WTC11 (cell line): ENCODE measurements at regions of chr11 and their contacts with region 1.

Region 1: DNA sequence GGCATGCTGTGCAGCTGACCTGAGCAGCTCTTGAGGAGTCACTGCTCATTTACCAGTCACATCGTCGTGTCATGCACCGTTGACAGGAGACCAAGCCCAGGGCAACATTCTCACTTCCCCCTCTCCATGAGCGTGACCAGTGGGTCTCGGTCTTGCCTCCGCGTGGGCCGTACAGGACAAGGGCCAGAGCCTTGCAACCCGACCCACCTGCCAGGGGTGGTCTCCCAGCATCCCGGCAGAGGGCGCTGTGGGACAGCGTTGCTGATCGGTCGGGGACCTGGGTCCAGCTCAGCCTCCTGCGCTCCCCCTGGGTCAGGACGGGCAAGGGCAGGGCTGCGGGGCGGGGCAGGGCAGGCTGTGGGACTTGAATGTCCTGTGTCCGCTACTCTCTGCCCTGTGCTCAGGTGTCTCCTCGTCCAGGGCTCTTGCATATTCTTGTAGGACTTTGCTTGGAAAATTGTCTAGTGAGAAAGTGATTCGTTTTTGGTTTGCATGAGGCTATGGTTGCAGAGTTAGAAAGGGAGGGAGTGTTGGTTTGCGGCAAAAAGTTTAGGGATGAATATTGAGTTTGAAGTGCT is 16.2 kb downstream of the EIF4G2 start:
- DNase-seq: peak; percentile 98
- ATAC-seq: peak; percentile 93
- H3K4me3 Mint-ChIP-seq: peak overlapping the region; percentile 27; the same call in 1 of the 2 replicates
- H3K27ac Mint-ChIP-seq: no peak overlapping the region
- H3K4me1 Mint-ChIP-seq: peaks cover 4% of the 10 kb centered on the region
- H3K27me3 Mint-ChIP-seq: peaks cover 3% of the 10 kb centered on the region; the same call in 1 of the 2 replicates
- CTCF ChIP-seq: peak; percentile 94

Region 2: GRCh38 chr11:10108915-10109680 is 683.4 kb before region 1 on chr11:
- CTCF ChIA-PET with region 1: no interaction called
- POLR2A ChIA-PET with region 1: no interaction called
- DNase-seq: no peak
- ATAC-seq: no peak
- H3K4me3 Mint-ChIP-seq: no peak overlapping the region
- H3K27ac Mint-ChIP-seq: peak overlapping the region; percentile 84
- H3K4me1 Mint-ChIP-seq: peaks cover 21% of the 10 kb centered on the region
- H3K27me3 Mint-ChIP-seq: no peaks in the 10 kb centered on the region
- CTCF ChIP-seq: no peak

Region 3: DNA sequence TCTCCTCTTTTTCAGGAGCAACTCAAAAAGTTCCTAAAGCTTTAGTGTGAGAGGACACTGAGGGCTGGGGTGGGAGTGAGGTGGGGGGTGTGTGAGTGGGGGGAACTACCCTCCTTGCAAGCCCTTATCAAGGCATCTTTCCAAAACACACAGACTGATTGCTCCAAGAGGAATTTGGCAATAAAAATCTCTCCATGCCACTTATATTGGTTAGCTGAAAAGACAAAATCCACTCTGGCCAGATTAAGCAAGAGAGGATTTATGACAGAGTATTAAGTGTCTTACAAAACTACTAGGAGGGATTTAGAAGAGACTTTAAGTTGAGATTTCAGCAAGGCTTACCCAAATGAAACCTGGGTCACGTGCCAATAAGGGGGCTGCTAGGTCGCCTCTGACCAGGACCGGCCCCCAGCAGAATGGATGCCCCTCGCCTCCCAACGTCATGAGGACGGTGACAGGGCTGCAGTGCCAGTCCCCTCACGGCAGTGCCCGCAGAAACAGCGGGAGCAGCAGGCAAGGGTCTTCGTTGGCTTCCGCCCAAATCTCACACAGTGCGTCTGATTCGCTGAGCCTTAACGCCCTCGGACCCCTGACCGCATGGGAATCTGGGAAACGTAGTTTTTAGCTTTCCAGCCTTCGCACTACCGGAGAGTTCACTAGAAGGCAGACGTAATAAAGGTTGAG is 63.6 kb before region 1 on chr11:
- CTCF ChIA-PET with region 1: no interaction called
- POLR2A ChIA-PET with region 1: no interaction called
- DNase-seq: peak; percentile 67
- ATAC-seq: peak; percentile 95
- H3K4me3 Mint-ChIP-seq: peak overlapping the region; percentile 76
- H3K27ac Mint-ChIP-seq: no peak overlapping the region
- H3K4me1 Mint-ChIP-seq: peaks cover 4% of the 10 kb centered on the region
- H3K27me3 Mint-ChIP-seq: no peaks in the 10 kb centered on the region; the same call in 1 of the 2 replicates
- CTCF ChIP-seq: no peak

Region 4: DNA sequence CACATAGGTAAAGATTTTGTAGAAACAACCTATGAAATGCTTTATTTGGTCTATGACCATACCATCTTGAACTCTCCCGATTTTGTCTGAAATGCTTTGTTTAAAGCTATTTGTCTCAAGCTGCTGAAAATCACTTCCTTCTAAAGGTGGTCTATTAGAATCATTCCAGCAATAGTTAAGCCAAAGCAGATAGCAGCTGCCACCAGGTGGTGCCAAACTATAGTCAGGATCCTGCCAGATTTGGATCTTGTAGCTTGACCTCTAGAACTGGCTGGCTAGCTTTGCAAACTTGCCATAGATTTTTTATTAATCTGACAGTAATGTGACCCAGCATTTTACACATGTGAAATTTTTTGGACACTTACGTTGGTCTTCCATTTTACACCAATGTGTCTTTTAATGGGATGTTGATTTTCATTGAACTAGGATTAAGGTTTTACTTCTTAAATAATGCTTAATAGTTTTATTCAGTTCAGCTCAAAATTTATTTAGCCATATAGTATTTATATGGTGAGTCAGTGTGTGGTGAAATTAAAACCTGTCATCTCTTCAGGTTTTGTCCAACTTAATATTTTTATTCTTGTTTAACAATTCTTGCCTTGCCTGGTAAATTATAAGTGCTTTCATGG is 21.7 kb before region 1 on chr11:
- CTCF ChIA-PET with region 1: interaction called, 34 read pairs
- POLR2A ChIA-PET with region 1: interaction called, 3 read pairs
- DNase-seq: peak; percentile 61
- ATAC-seq: peak; percentile 41; the same call in 1 of the 2 replicates
- H3K4me3 Mint-ChIP-seq: no peak overlapping the region
- H3K27ac Mint-ChIP-seq: no peak overlapping the region
- H3K4me1 Mint-ChIP-seq: peaks cover 12% of the 10 kb centered on the region
- H3K27me3 Mint-ChIP-seq: no peaks in the 10 kb centered on the region
- CTCF ChIP-seq: peak; percentile 38

Region 5: DNA sequence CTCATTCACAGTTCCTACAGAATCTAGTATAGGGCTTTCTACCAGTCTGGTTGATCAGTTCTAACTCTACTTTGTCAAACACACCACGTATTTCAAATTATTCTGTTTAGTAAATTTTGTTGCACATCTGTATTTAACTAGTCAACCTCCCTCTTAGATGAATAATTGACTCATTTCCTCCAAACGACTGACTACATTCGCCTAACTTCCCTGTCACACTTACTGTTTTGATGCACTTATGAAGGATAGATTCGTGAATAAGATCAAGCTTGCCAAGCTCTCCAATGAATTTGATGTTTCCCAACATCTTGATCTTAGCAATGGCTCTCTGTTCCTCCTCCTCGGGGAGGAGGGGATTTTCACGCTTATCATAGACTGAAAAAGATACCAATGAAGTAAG is 11.2 kb after region 1 on chr11:
- CTCF ChIA-PET with region 1: interaction called, 29 read pairs
- POLR2A ChIA-PET with region 1: interaction called, 27 read pairs
- DNase-seq: no peak
- ATAC-seq: no peak
- H3K4me3 Mint-ChIP-seq: no peak overlapping the region
- H3K27ac Mint-ChIP-seq: peak overlapping the region; percentile 6; the same call in 1 of the 2 replicates
- H3K4me1 Mint-ChIP-seq: peaks cover 18% of the 10 kb centered on the region
- H3K27me3 Mint-ChIP-seq: no peaks in the 10 kb centered on the region
- CTCF ChIP-seq: no peak

Region 6: DNA sequence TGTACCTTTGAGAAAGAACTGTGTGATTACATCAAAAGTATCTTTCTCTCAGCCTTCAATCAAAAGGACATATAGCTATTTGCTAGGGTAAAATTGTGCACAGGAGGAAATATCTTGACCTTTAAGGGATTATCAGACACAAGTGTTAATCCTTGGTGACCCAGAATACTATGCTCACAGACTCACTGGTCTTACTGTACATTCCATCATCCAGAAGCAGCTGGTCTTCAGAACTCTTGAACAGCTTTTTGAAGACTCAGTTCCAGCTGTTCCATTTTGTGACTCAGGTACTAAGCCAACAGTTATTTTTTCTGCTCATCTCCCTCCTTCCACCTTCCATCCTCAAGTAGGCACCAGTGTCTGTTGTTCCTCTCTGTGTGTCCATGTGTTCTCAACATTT is 45.6 kb after region 1 on chr11:
- CTCF ChIA-PET with region 1: interaction called, 3 read pairs
- POLR2A ChIA-PET with region 1: interaction called, 10 read pairs
- DNase-seq: no peak
- ATAC-seq: no peak
- H3K4me3 Mint-ChIP-seq: no peak overlapping the region
- H3K27ac Mint-ChIP-seq: no peak overlapping the region
- H3K4me1 Mint-ChIP-seq: peaks cover 5% of the 10 kb centered on the region; the same call in 1 of the 2 replicates
- H3K27me3 Mint-ChIP-seq: peaks cover 4% of the 10 kb centered on the region
- CTCF ChIP-seq: no peak

Region 7: GRCh38 chr11:10878408-10879214 is 86.1 kb after region 1 on chr11:
- CTCF ChIA-PET with region 1: interaction called, 13 read pairs
- POLR2A ChIA-PET with region 1: no interaction called
- DNase-seq: no peak
- ATAC-seq: peak; percentile 90
- H3K4me3 Mint-ChIP-seq: no peak overlapping the region
- H3K27ac Mint-ChIP-seq: no peak overlapping the region
- H3K4me1 Mint-ChIP-seq: peaks cover 9% of the 10 kb centered on the region
- H3K27me3 Mint-ChIP-seq: no peaks in the 10 kb centered on the region; the same call in 1 of the 2 replicates
- CTCF ChIP-seq: peak; percentile 47; the same call in 1 of the 2 replicates

Region 8: DNA sequence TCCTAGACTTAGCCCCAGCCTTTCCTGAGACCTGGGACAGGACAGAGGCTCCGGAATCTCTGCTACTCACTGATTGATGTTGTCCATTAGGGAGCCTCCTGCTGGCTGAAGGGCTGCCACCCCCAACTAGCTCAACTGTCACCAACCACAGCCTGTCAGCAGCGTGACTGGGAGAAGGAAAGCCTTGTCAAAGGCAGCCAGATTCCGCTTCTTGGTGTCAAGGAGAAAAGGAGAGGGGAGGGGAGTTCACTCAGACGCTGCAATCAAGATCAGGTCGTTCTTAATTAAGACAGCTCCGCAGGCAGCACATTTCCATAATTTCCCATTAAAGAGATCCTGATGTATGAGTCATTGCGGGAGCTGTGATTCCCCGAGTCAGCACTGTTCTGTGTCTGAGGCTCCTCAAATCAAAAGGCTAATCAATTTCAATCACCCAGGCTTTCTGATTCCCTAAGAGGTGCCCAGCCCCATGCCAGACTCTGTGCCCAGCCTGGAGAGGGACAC is 218.2 kb after region 1 on chr11:
- CTCF ChIA-PET with region 1: interaction called, 23 read pairs
- POLR2A ChIA-PET with region 1: interaction called, 3 read pairs
- DNase-seq: peak; percentile 47
- ATAC-seq: peak; percentile 92
- H3K4me3 Mint-ChIP-seq: peak overlapping the region; percentile 38
- H3K27ac Mint-ChIP-seq: no peak overlapping the region
- H3K4me1 Mint-ChIP-seq: peaks cover 21% of the 10 kb centered on the region
- H3K27me3 Mint-ChIP-seq: peaks cover 5% of the 10 kb centered on the region
- CTCF ChIP-seq: no peak